CD8-positive, alpha-beta memory T cell (primary cell): ENCODE measurements at regions of chr10 and their contacts with region 1.

Region 1: GRCh38 chr10:72273410-72274212 is at the start of gene DDIT4:
- DNase-seq: peak; percentile 95 to 98 (median 96)
- H3K4me3 ChIP-seq: peak within 1 kb of the TSS; percentile 88
- H3K4me3 Mint-ChIP-seq: peak within 1 kb of the TSS; percentile 96 to 99 (median 98)
- H3K27ac ChIP-seq: peak within 1 kb of the TSS; percentile 94
- H3K27ac Mint-ChIP-seq: peak within 1 kb of the TSS; percentile 89 to 97 (median 96)
- H3K4me1 ChIP-seq: peaks cover 32% of the 10 kb centered on the region
- H3K4me1 Mint-ChIP-seq: peaks cover 28 to 56% (median 49%) of the 10 kb centered on the region in 3 donors
- H3K27me3 ChIP-seq: no peaks in the 10 kb centered on the region
- H3K27me3 Mint-ChIP-seq: no peaks in the 10 kb centered on the region
- total RNA-seq, gene DDIT4: 144 to 156 TPM

Region 2: DNA sequence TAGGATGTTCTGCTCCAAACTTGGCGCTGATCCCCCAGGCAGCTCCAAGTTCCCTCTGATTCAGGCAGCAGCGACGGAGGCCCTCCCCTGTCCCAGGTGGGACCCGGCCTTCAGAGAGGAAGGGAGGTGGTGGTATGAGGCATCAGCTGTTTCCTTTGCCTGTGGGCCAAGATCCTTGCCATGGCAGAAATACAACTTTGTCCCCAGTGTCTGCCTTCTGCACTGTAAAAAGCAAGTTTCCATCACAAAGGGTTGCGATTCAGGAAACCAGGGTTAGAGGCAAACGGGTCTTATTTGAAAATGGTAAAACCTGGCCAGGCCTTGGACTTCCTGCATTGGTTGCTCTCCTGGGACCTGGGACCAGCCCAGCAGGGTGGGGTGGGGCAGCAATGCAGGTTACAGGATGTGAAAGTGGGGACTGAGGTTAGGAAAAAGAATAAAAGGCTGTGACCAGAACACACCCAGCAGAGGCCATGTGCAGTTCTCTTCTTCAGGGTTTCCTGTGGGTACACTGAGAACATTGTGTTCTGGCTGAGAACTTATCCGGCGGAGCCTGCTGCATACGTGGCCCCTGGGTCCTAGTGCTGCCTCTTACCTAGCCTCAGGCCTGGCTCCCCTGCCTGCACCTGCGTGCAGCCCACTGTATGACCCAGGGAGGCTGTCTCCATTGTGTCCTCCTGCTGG is 25.0 kb before region 1 on chr10:
- CTCF ChIA-PET with region 1: interaction called, 28 read pairs
- POLR2A ChIA-PET with region 1: interaction called, 15 read pairs
- DNase-seq: peak; percentile 46 to 89 (median 80)
- H3K4me3 ChIP-seq: peak overlapping the region; percentile 55
- H3K4me3 Mint-ChIP-seq: peak overlapping the region; percentile 68 to 93 (median 84)
- H3K27ac ChIP-seq: peak overlapping the region; percentile 47
- H3K27ac Mint-ChIP-seq: peak overlapping the region; percentile 90 to 98 (median 95)
- H3K4me1 ChIP-seq: peaks cover 94% of the 10 kb centered on the region
- H3K4me1 Mint-ChIP-seq: peaks cover 61 to 88% (median 85%) of the 10 kb centered on the region in 3 donors
- H3K27me3 ChIP-seq: no peaks in the 10 kb centered on the region
- H3K27me3 Mint-ChIP-seq: no peaks in the 10 kb centered on the region

Region 3: GRCh38 chr10:72260588-72261322 is 12.9 kb before region 1 on chr10:
- CTCF ChIA-PET with region 1: interaction called, 29 read pairs
- POLR2A ChIA-PET with region 1: interaction called, 7 read pairs
- DNase-seq: peak; percentile 73 to 87 (median 78)
- H3K4me3 ChIP-seq: peak overlapping the region; percentile 72
- H3K4me3 Mint-ChIP-seq: peak overlapping the region; percentile 81 to 94 (median 89)
- H3K27ac ChIP-seq: peak overlapping the region; percentile 89
- H3K27ac Mint-ChIP-seq: peak overlapping the region; percentile 92 to 99 (median 97)
- H3K4me1 ChIP-seq: peaks cover 83% of the 10 kb centered on the region
- H3K4me1 Mint-ChIP-seq: peaks cover 52 to 64% (median 63%) of the 10 kb centered on the region in 3 donors
- H3K27me3 ChIP-seq: no peaks in the 10 kb centered on the region
- H3K27me3 Mint-ChIP-seq: no peaks in the 10 kb centered on the region

Region 4: GRCh38 chr10:72292223-72292691 is 18.6 kb after region 1 on chr10:
- CTCF ChIA-PET with region 1: interaction called, 43 read pairs
- POLR2A ChIA-PET with region 1: interaction called, 23 read pairs
- DNase-seq: no peak
- H3K4me3 ChIP-seq: no peak overlapping the region
- H3K4me3 Mint-ChIP-seq: no peak overlapping the region
- H3K27ac ChIP-seq: no peak overlapping the region
- H3K27ac Mint-ChIP-seq: peak overlapping the region; percentile 44 to 94 (median 76)
- H3K4me1 ChIP-seq: peaks cover 62% of the 10 kb centered on the region
- H3K4me1 Mint-ChIP-seq: peaks cover 40 to 62% (median 56%) of the 10 kb centered on the region in 3 donors
- H3K27me3 ChIP-seq: no peaks in the 10 kb centered on the region
- H3K27me3 Mint-ChIP-seq: peaks cover 0 to 5% of the 10 kb centered on the region in 2 donors

Region 5: GRCh38 chr10:72319416-72320254 is 46.0 kb after region 1 on chr10:
- CTCF ChIA-PET with region 1: interaction called, 52 read pairs
- POLR2A ChIA-PET with region 1: interaction called, 6 read pairs
- DNase-seq: peak; percentile 80 to 92 (median 89)
- H3K4me3 ChIP-seq: peak overlapping the region; percentile 61
- H3K4me3 Mint-ChIP-seq: peak overlapping the region; percentile 78 to 92 (median 82)
- H3K27ac ChIP-seq: peak overlapping the region; percentile 89
- H3K27ac Mint-ChIP-seq: peak overlapping the region; percentile 76 to 100 (median 99)
- H3K4me1 ChIP-seq: peaks cover 89% of the 10 kb centered on the region
- H3K4me1 Mint-ChIP-seq: peaks cover 66 to 88% (median 70%) of the 10 kb centered on the region in 3 donors
- H3K27me3 ChIP-seq: no peaks in the 10 kb centered on the region
- H3K27me3 Mint-ChIP-seq: peaks cover 0 to 1% of the 10 kb centered on the region in 2 donors

Region 6: DNA sequence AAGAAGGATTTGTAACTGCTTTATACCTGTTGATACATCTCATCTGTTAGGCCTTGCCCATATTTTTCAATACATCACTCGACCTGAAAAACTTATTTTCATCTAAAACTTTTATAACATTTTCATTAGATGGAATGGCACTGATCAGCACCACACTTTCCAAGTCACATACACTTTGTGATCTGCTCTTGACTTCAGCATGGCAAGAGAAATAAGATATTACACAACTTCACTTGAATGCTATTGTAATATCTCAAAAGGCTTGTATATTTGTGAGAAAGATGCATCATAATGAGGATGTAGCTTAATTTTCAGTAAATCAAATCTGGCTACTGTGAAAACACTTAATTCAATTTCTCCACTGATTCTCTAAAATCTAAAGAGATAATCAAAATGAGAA is 226.1 kb after region 1 on chr10:
- CTCF ChIA-PET with region 1: no interaction called
- POLR2A ChIA-PET with region 1: no interaction called
- DNase-seq: no peak
- H3K4me3 ChIP-seq: no peak overlapping the region
- H3K4me3 Mint-ChIP-seq: no peak overlapping the region
- H3K27ac ChIP-seq: no peak overlapping the region
- H3K27ac Mint-ChIP-seq: no peak overlapping the region
- H3K4me1 ChIP-seq: no peaks in the 10 kb centered on the region
- H3K4me1 Mint-ChIP-seq: peaks cover 6 to 17% (median 10%) of the 10 kb centered on the region in 3 donors
- H3K27me3 ChIP-seq: no peaks in the 10 kb centered on the region
- H3K27me3 Mint-ChIP-seq: no peaks in the 10 kb centered on the region